ENCODE measurements at regions of chr7 and their contacts with region 1.

Region 1: GRCh38 chr7:2709553-2710285 is 21.7 kb downstream of the AMZ1 start:
- DNase-seq: peak; percentile 50
- H3K27ac ChIP-seq: no peak overlapping the region
- CTCF ChIP-seq: peak; percentile 94

Region 2: GRCh38 chr7:2519119-2519930 is 190.4 kb before region 1 on chr7 and contains the start of gene LFNG:
- CTCF ChIA-PET with region 1: no interaction called
- POLR2A ChIA-PET with region 1: no interaction called
- DNase-seq: peak; percentile 94
- H3K27ac ChIP-seq: peak within 1 kb of the TSS; percentile 100
- CTCF ChIP-seq: no peak

Region 3: GRCh38 chr7:2670720-2671391 is 38.9 kb before region 1 on chr7:
- CTCF ChIA-PET with region 1: interaction called, 12 read pairs
- POLR2A ChIA-PET with region 1: no interaction called
- DNase-seq: peak; percentile 68
- H3K27ac ChIP-seq: no peak overlapping the region
- CTCF ChIP-seq: peak; percentile 96

Measured in RWPE1 (cell line).